Right ventricle myocardium inferior (tissue), 1 donor: ENCODE measurements at regions of chr1 and their contacts with region 1.

Region 1: DNA sequence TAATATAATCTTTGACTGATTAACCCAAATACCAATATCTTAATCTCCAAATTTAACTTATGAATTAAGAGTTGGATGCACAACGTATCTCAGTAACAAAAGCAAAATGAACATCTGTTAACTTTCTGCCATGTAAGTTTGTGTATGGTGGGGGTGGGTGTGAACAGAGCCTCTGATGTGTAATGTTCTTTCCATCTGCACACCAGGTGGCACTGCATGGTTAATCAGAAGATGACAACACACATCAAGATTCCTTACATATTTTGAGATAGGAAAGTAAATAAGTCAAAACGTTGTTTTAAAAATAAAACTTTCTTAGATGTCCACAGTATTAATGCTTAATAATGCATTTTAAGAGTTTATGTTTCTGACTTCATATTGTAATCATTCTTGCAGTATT is 251.9 kb downstream of the DPYD start:
- DNase-seq: no peak
- ATAC-seq: no peak

Region 2: GRCh38 chr1:97806996-97807520 is 138.1 kb after region 1 on chr1:
- intact Hi-C with region 1: loop called (anchors 10 kb)
- DNase-seq: no peak
- ATAC-seq: no peak